ENCODE measurements at regions of chr2 and their contacts with region 1.

Region 1: GRCh38 chr2:187499941-187500532 is 52.0 kb upstream of the CALCRL start:
- DNase-seq: no peak
- H3K4me3 ChIP-seq: no peak overlapping the region
- H3K27me3 ChIP-seq: no peaks in the 10 kb centered on the region
- CTCF ChIP-seq: peak; percentile 73

Region 2: GRCh38 chr2:187569042-187569441 is 69.0 kb after region 1 on chr2:
- CTCF ChIA-PET with region 1: interaction called, 14 read pairs
- POLR2A ChIA-PET with region 1: no interaction called
- DNase-seq: no peak
- H3K4me3 ChIP-seq: no peak overlapping the region
- H3K27me3 ChIP-seq: no peaks in the 10 kb centered on the region
- CTCF ChIP-seq: no peak

Region 3: GRCh38 chr2:187842978-187843847 is 343.2 kb after region 1 on chr2:
- CTCF ChIA-PET with region 1: interaction called, 12 read pairs
- POLR2A ChIA-PET with region 1: no interaction called
- DNase-seq: peak; percentile 3
- H3K4me3 ChIP-seq: no peak overlapping the region
- H3K27me3 ChIP-seq: peaks cover 2% of the 10 kb centered on the region; the same call in 1 of the 2 replicates
- CTCF ChIP-seq: peak; percentile 62

Measured in BJ (cell line).